ENCODE measurements at regions of chr4 and their contacts with region 1.

Region 1: DNA sequence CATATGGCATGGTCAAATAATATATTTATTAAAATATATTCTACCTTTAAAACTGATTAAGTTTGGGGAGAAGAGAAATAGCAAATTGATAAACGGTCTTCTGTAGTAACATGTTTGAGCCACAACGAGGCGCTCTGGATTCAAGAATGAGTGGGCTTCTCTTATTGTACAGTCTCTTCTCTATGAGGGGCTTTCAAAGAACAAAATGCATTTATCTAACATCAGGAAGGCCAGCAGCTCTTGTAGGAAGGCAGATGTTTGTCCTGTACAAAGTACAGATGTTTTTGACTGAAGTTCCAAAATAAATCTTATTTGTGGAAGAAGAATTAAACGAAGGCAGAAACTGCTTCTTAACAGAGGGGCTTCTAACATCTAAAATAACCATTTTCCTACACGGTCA is 153.6 kb downstream of the RASL11B start:
- ATAC-seq: peak in 1 of 8 experiments; percentile 27
- H3K4me3 ChIP-seq: no peak overlapping the region
- H3K27ac ChIP-seq: no peak overlapping the region
- H3K4me1 ChIP-seq: peaks cover 6 to 10% of the 10 kb centered on the region in 2 donors

Region 2: DNA sequence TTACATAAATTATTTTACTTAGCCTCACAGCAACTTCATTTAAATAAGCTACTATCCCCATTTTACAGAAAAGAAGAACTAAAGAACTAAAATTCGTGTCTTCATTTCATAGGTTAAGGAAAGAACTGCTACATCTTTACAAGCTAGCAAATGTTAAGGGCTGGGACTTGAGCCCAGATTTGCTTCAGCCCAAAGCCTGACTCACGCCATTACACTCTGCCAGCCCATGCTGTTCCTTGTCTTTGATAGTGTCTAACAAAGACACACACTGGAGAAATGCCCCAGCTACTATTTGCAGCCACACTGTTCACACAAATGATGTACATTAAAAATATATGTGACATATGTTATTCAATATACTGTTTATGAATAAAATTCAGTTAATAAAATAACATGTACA is 235.5 kb before region 1 on chr4:
- in situ Hi-C with region 1: no loop called
- ATAC-seq: no peak
- H3K4me3 ChIP-seq: no peak overlapping the region
- H3K27ac ChIP-seq: no peak overlapping the region
- H3K4me1 ChIP-seq: no peaks in the 10 kb centered on the region

Region 3: DNA sequence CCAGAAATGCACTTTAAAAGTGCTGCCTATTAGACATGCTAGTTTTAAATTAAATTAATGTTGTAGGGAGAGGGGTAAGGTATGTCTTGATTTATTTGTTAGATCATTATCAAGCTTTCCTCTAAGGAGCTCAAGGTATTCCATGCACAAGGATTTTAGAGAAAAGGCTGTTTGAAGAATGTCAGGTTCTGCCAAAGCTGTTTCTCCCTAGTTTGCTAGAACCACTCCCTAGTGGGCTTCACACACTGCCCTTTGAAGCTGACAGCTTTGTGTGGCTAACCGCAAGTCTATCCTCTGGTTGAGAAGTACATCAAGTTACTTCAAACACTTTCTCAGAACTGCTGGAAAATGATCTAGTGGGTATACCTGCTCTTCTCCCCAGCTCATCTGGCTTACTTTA is 121.2 kb before region 1 on chr4:
- in situ Hi-C with region 1: no loop called
- ATAC-seq: no peak
- H3K4me3 ChIP-seq: no peak overlapping the region
- H3K27ac ChIP-seq: no peak overlapping the region
- H3K4me1 ChIP-seq: no peaks in the 10 kb centered on the region

Region 4: DNA sequence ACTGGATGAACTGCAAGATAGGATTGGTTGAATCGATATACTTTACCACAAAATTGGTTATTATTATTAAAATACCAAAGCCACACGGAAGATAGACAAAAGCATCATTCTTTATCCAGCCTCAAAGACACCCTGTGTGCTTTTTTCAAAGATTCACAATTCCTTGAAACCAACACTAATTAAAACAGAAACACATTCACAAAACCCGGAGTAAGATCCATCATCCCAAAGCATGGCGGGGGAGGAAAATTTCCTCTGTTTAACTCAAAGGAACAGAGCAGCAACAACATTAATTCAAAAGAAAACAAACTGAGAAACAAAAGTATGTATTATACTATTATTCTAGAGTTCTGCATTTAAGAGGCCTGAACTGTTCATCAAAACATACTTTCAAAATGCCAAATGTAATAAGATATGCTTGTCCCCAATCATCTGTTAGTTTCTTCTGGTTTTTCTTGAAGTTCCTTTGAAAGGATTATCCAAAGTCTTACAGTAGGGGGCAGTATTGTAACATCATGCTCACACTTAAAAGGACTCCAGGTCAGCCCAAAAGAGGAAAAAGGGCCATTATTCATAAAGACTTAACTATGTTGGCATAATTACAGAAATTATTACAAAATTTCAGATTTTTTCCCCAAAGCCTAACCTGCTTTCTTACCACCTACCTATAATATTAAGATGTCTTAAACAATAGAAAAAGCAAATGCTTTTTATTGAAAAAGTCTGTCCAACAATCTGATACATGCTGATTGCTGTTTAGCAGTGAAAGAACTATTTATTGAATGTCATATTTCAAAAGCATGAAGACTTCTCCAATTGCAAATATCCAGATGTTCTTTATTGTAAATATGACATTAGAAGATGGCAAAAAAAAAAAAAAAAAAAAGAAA is 181.4 kb after region 1 on chr4:
- in situ Hi-C with region 1: loop called in 2 of 9 experiments (anchors 25 kb)
- ATAC-seq: peak in 3 of 8 experiments; percentile 86
- H3K4me3 ChIP-seq: no peak overlapping the region
- H3K27ac ChIP-seq: no peak overlapping the region
- H3K4me1 ChIP-seq: no peaks in the 10 kb centered on the region

Region 5: DNA sequence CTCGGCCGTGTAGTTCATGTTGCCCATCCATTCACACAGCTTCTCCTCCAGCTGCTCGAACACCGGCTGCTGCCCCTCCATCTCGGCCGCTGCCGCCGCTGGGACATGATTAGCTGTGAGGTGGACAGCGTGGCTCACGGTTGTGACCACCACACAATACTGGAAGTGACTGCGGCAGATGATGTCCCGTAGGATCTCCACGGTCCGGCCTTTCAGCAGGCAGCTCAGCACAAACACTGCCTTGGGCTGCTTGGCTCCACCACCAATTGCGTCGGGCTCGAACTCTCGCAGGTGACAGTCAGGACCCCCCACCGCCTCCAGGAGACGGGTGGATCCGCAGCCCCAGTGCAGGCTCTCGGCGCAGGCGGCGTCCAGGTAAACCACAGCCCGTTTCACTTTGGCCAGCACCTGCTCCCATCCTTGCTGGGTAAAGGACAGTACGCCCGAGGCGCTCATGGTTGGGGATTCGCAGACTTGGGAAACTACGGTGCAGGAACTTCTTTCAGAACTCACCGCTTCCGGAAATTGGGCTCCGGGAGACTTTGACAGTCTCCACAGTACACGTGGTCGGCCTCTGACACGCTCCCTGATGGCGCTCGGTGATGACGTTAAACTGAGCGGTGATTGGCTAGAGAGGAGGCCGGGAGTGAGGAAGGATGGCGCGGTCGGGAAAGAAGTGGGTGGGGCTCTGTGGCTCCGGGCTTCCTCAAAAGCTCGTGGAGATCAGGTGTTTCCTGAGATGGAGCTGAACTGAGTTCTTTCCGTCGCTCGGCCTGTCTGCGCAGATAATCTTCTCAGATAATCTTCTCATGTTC is 350.0 kb after region 1 on chr4 and contains the start of gene SCFD2:
- in situ Hi-C with region 1: loop called in 2 of 9 experiments (anchors 25 kb)
- ATAC-seq: peak; percentile 93 to 99 (median 98)
- H3K4me3 ChIP-seq: peak within 1 kb of the TSS; percentile 57 to 99 (median 90)
- H3K27ac ChIP-seq: peak within 1 kb of the TSS; percentile 82 to 98
- H3K4me1 ChIP-seq: peaks cover 11 to 40% of the 10 kb centered on the region in 2 donors
- total RNA-seq, gene SCFD2: 9.0 to 40.3 (median 21.1) TPM

Region 6: GRCh38 chr4:53908661-53909078 is 893.0 kb after region 1 on chr4:
- in situ Hi-C with region 1: loop called in 1 of 9 experiments (anchors 25 kb)
- ATAC-seq: peak; percentile 36 to 87 (median 73)
- H3K4me3 ChIP-seq: no peak overlapping the region
- H3K27ac ChIP-seq: no peak overlapping the region
- H3K4me1 ChIP-seq: peaks cover 0 to 8% of the 10 kb centered on the region in 2 donors

Region 7: DNA sequence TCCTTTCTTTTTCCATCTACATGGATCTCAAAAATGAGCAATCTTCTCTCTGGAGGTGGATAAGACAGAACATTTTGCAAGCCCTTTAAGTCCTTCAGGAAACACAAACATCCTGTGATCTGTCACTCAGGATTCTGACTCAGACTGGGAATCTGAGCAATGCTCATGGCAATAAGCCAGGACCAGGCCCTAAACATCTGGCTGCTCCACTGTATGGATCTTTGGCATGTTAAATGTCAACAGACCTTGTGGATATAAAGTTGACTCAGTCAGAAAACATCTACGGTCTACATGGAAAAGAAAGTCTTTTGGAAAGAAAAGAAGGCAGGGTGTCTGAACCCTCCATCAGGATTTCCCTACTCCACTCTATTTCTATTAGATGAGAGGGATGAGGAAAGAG is 1066.5 kb after region 1 on chr4:
- in situ Hi-C with region 1: no loop called
- ATAC-seq: peak in 4 of 8 experiments; percentile 22 to 93 (median 54)
- H3K4me3 ChIP-seq: no peak overlapping the region
- H3K27ac ChIP-seq: no peak overlapping the region
- H3K4me1 ChIP-seq: no peaks in the 10 kb centered on the region

Region 8: GRCh38 chr4:54217642-54218495 is 1202.2 kb after region 1 on chr4:
- in situ Hi-C with region 1: loop called in 3 of 9 experiments (anchors 25 kb)
- ATAC-seq: peak; percentile 59 to 99 (median 98)
- H3K4me3 ChIP-seq: peak overlapping the region; percentile 15 to 46 (median 27)
- H3K27ac ChIP-seq: no peak overlapping the region
- H3K4me1 ChIP-seq: no peaks in the 10 kb centered on the region

Region 9: GRCh38 chr4:54233277-54233696 is 1217.6 kb after region 1 on chr4:
- in situ Hi-C with region 1: loop called in 3 of 9 experiments (anchors 25 kb)
- ATAC-seq: peak; percentile 55 to 96 (median 95)
- H3K4me3 ChIP-seq: peak overlapping the region; percentile 39 to 66 (median 49)
- H3K27ac ChIP-seq: no peak overlapping the region
- H3K4me1 ChIP-seq: peaks cover 0 to 6% of the 10 kb centered on the region in 2 donors